ENCODE measurements at regions of chr9 and their contacts with region 1.

Region 1: DNA sequence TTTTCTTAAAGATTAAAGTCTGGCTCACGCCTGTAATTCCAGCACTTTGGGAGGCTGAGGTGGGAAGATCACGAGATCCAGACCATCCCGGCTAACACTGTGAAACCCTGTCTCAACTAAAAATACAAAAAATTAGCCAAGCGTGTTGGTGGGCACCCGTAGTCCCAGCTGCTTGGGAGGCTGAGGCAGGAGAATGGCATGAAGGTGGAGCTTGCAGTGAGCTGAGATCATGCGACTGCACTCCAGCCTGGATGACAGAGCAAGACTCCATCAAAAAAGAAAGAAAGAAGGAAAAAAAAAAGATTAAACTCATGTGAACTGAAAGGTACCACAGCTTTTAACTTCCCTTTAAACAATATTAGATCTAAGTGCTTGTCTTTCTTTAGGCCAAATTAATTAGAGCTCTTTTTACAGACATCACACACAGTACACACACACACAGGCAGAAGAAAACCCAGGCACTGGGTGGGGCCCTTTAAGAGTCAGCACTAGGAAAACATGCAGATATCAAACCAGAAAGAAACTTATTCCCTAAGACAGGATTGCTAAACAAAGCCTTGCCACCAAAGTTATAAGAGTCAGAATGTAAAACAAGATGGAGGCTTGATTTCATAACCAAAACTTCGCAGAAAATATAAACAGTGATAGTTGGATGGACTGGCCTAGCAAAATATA is 29.3 kb upstream of the UHRF2 start:
- DNase-seq: peak; percentile 24
- H3K4me3 ChIP-seq: no peak overlapping the region
- H3K27ac ChIP-seq: peak overlapping the region; percentile 96
- H3K27me3 ChIP-seq: no peaks in the 10 kb centered on the region
- CTCF ChIP-seq: no peak

Region 2: DNA sequence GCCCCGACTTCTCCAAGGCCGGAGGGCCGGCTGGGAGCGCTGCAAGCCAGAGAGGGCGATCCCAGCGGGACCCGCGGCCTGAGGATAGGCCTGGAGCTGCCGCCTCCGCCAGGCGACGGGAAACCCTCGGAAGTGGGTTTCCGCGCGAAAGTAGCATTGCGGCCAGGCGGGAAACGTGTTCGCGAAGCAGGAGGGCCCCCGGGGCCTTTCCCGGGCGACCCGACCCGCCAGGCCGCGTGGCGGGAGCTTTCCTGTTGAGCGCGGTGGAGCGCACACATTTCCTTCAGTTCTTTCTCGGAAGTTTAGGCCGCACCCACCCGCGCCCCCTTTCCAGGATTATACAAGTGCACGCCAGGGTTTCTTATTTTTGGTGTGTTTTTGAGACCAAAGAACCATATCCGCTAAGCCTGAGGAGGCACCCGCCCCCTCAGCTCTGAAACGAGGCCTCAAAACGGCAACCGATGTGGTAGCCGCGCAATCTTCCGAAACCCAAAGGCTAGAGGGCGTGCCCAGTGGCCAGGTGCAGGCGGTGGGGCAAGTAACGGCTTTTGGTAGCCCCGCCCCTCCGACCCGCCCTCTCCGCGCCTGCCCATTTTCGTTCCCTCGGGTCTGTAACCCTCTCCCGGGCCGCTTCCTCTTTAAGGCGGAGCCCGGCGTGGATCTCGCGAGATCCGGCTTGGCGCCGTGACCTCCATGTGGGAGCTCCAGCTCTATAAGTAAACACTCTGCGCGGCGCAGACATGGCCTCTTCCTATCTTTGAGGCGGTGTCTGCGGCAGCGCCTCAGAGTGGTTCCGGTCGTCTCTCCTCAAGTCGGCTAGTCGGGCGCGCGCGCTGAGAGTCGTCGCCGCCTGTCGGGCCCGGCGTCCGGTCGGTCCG is 29.0 kb after region 1 on chr9 and contains the start of gene UHRF2:
- CTCF ChIA-PET with region 1: no interaction called
- POLR2A ChIA-PET with region 1: interaction called, 18 read pairs
- DNase-seq: peak; percentile 94
- H3K4me3 ChIP-seq: peak within 1 kb of the TSS; percentile 91
- H3K27ac ChIP-seq: peak within 1 kb of the TSS; percentile 85
- H3K27me3 ChIP-seq: no peaks in the 10 kb centered on the region
- CTCF ChIP-seq: no peak
- polyA plus RNA-seq, gene UHRF2: 41.5 and 56.0 TPM in 2 replicates